ENCODE measurements at regions of chr14 and their contacts with region 1.

Region 1: GRCh38 chr14:22852940-22853767 is 16.8 kb downstream of the MMP14 start:
- DNase-seq: peak; percentile 83
- ATAC-seq: peak; percentile 66
- H3K4me3 ChIP-seq: peak overlapping the region; percentile 38
- H3K27ac ChIP-seq: peak overlapping the region; percentile 77
- H3K4me1 ChIP-seq: peaks cover 30% of the 10 kb centered on the region
- H3K27me3 ChIP-seq: no peaks in the 10 kb centered on the region
- CTCF ChIP-seq: peak; percentile 95
- POLR2A ChIP-seq: peak; percentile 54; the same call in 1 of the 2 replicates
- RAD21 ChIP-seq: peak; percentile 98

Region 2: GRCh38 chr14:22314181-22314820 is 538.9 kb before region 1 on chr14:
- CTCF ChIA-PET with region 1: no interaction called
- POLR2A ChIA-PET with region 1: no interaction called
- dilution Hi-C with region 1: no loop called
- in situ Hi-C with region 1: no loop called
- intact Hi-C with region 1: no loop called
- DNase-seq: peak; percentile 62
- ATAC-seq: peak; percentile 93
- H3K4me3 ChIP-seq: no peak overlapping the region
- H3K27ac ChIP-seq: no peak overlapping the region
- H3K4me1 ChIP-seq: no peaks in the 10 kb centered on the region
- H3K27me3 ChIP-seq: peaks cover 2% of the 10 kb centered on the region; the same call in 1 of the 2 replicates
- CTCF ChIP-seq: peak; percentile 65
- POLR2A ChIP-seq: no peak
- RAD21 ChIP-seq: peak; percentile 50

Region 3: GRCh38 chr14:22386924-22387775 is 466.0 kb before region 1 on chr14:
- CTCF ChIA-PET with region 1: interaction called, 3 read pairs
- POLR2A ChIA-PET with region 1: no interaction called
- dilution Hi-C with region 1: no loop called
- in situ Hi-C with region 1: loop called (anchors 25 kb)
- intact Hi-C with region 1: loop called (anchors 5 kb)
- DNase-seq: peak; percentile 72
- ATAC-seq: peak; percentile 83
- H3K4me3 ChIP-seq: no peak overlapping the region
- H3K27ac ChIP-seq: no peak overlapping the region
- H3K4me1 ChIP-seq: no peaks in the 10 kb centered on the region; the same call in 1 of the 2 replicates
- H3K27me3 ChIP-seq: peaks cover 8% of the 10 kb centered on the region
- CTCF ChIP-seq: peak; percentile 85
- POLR2A ChIP-seq: no peak
- RAD21 ChIP-seq: peak; percentile 88

Region 4: DNA sequence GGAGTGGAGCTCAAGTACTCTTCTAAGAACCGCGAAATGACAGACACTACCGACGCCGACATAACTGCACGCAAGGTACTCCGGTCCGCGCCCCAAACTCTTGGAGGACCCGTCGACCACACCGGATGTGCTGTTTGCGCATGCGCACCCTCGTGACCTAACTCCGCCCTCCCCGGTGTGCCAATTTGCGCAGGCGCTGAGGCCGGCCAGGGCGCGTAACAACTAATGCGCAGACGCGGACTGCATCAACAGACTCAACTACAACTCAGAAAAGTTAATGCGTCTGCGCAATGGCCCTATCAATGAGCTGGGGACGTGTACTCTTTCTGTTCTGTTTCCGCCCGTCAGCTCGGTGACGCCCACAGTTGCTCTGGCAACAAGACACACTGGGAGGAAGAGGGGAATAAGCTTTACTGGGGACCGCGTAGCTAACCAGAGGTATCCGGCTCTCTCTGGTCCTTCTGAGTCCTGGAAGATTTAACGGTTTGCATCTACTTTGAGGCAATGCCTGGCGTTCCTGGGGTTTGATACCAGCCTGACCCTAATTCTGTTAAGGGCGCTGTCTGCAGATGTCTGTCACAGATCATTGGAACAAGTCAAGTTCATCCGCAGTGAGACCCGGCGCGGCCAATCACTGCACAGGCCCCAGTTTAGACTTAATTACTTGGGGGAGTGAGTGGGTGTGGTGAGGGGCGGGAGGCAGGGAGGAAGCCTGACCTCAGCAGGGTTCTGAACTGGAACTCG is 263.9 kb before region 1 on chr14 and contains the start of gene DAD1:
- CTCF ChIA-PET with region 1: no interaction called
- POLR2A ChIA-PET with region 1: no interaction called
- dilution Hi-C with region 1: no loop called
- in situ Hi-C with region 1: loop called (anchors 10 kb)
- intact Hi-C with region 1: no loop called
- DNase-seq: peak; percentile 100
- ATAC-seq: peak; percentile 95
- H3K4me3 ChIP-seq: peak within 1 kb of the TSS; percentile 63
- H3K27ac ChIP-seq: peak within 1 kb of the TSS; percentile 75
- H3K4me1 ChIP-seq: peaks cover 3% of the 10 kb centered on the region
- H3K27me3 ChIP-seq: no peaks in the 10 kb centered on the region; the same call in 1 of the 2 replicates
- CTCF ChIP-seq: no peak
- POLR2A ChIP-seq: peak; percentile 97
- RAD21 ChIP-seq: no peak
- total RNA-seq, gene DAD1: 396 and 449 TPM in 2 replicates

Region 5: DNA sequence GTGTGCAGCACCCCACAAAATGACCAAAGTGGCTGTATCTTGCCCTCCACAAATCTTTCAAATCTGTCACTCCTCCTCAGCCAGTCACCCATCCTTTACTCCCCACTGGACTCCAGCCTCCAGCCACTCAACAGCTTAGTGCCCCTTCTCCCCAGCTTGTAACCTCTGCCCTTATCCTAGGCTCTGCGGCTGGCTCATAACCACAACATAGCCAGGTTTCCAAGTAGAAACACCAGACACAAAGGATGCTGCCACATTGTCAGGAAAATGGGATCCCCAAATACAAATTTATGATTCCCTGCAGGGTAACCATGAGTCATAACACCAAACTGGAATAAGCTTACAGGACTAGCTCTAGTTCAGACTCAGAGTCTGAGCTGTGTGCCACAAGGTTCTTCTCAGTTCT is 71.6 kb before region 1 on chr14:
- CTCF ChIA-PET with region 1: interaction called, 3 read pairs
- POLR2A ChIA-PET with region 1: interaction called, 4 read pairs
- dilution Hi-C with region 1: no loop called
- in situ Hi-C with region 1: no loop called
- intact Hi-C with region 1: loop called (anchors 1 kb)
- DNase-seq: peak; percentile 43
- ATAC-seq: peak; percentile 70
- H3K4me3 ChIP-seq: no peak overlapping the region
- H3K27ac ChIP-seq: no peak overlapping the region
- H3K4me1 ChIP-seq: peaks cover 12% of the 10 kb centered on the region
- H3K27me3 ChIP-seq: no peaks in the 10 kb centered on the region
- CTCF ChIP-seq: no peak
- POLR2A ChIP-seq: no peak
- RAD21 ChIP-seq: no peak

Region 6: GRCh38 chr14:22829661-22830442 is 23.3 kb before region 1 on chr14 and contains the start of gene MRPL52:
- CTCF ChIA-PET with region 1: interaction called, 60 read pairs
- POLR2A ChIA-PET with region 1: interaction called, 4 read pairs
- dilution Hi-C with region 1: no loop called
- in situ Hi-C with region 1: no loop called
- intact Hi-C with region 1: no loop called
- DNase-seq: peak; percentile 87
- ATAC-seq: peak; percentile 97
- H3K4me3 ChIP-seq: peak within 1 kb of the TSS; percentile 95
- H3K27ac ChIP-seq: peak within 1 kb of the TSS; percentile 82
- H3K4me1 ChIP-seq: peaks cover 6% of the 10 kb centered on the region
- H3K27me3 ChIP-seq: no peaks in the 10 kb centered on the region
- CTCF ChIP-seq: no peak
- POLR2A ChIP-seq: peak; percentile 85
- RAD21 ChIP-seq: no peak
- total RNA-seq, gene MRPL52: 23.9 and 51.4 TPM in 2 replicates

Measured in IMR-90 (cell line).